Head of caudate nucleus (tissue), 42 donors: ENCODE measurements at regions of chr1 and their contacts with region 1.

Region 1: GRCh38 chr1:53278201-53278725 is 39.9 kb upstream of the MAGOH start:
- DNase-seq: peak; percentile 31 to 89 (median 74)

Region 2: GRCh38 chr1:53393325-53393792 is 115.1 kb after region 1 on chr1:
- intact Hi-C with region 1: loop called (anchors 2 kb)
- DNase-seq: peak; percentile 58 to 95 (median 88)